Psoas muscle (tissue), 8 donors: ENCODE measurements at regions of chr18 and their contacts with region 1.

Region 1: GRCh38 chr18:158128-159036 is at the start of gene USP14:
- DNase-seq: peak; percentile 97 to 99
- ATAC-seq: peak; percentile 98 to 99 (median 98)
- H3K4me3 ChIP-seq: peak within 1 kb of the TSS; percentile 79
- H3K27ac ChIP-seq: peak within 1 kb of the TSS; percentile 79
- H3K4me1 ChIP-seq: peaks cover 21% of the 10 kb centered on the region
- H3K27me3 ChIP-seq: no peaks in the 10 kb centered on the region
- CTCF ChIP-seq: no peak
- total RNA-seq, gene USP14: 59.7 to 76.1 (median 72.8) TPM

Region 2: DNA sequence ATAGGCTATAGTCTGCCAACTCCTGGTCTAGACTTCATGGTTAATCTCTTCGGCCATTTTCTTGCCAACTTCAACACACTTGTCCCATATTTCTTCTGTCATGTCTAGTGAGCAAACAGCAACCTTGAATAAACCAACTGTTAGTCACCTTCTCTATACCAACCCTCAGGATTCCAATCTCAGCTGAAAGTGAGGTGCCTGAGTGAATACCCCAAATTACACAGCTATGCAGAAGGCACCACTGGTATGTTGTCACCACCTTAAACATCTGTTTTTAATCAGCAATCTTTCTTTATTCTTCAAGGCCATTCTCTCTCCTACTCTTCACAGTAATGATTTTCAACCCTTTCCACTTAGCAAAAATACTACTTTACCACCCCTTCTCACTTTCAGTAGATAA is 70.2 kb after region 1 on chr18:
- intact Hi-C with region 1: no loop called
- DNase-seq: no peak
- ATAC-seq: no peak
- H3K4me3 ChIP-seq: no peak overlapping the region
- H3K27ac ChIP-seq: no peak overlapping the region
- H3K4me1 ChIP-seq: no peaks in the 10 kb centered on the region
- H3K27me3 ChIP-seq: no peaks in the 10 kb centered on the region
- CTCF ChIP-seq: no peak

Region 3: GRCh38 chr18:267688-268552 is 109.5 kb after region 1 on chr18 and contains the start of gene THOC1:
- intact Hi-C with region 1: loop called (anchors 2 to 5 kb)
- DNase-seq: peak; percentile 94 to 97
- ATAC-seq: peak; percentile 98 to 99 (median 99)
- H3K4me3 ChIP-seq: peak within 1 kb of the TSS; percentile 76
- H3K27ac ChIP-seq: peak within 1 kb of the TSS; percentile 79
- H3K4me1 ChIP-seq: peaks cover 22% of the 10 kb centered on the region
- H3K27me3 ChIP-seq: no peaks in the 10 kb centered on the region
- CTCF ChIP-seq: no peak
- total RNA-seq, gene THOC1: 8.7 to 13.8 (median 11.0) TPM